ENCODE measurements at regions of chr7 and their contacts with region 1.

Region 1: GRCh38 chr7:100568896-100569844 is 4.5 kb downstream of the SAP25 start:
- DNase-seq: peak; percentile 43 to 70 (median 46)
- H3K4me3 ChIP-seq: peak overlapping the region in 1 of 2 donors; percentile 47
- H3K4me3 Mint-ChIP-seq: peak overlapping the region; percentile 31 to 77 (median 68)
- H3K27ac ChIP-seq: peak overlapping the region; percentile 48
- H3K27ac Mint-ChIP-seq: peak overlapping the region; percentile 32 to 93 (median 83)
- H3K4me1 ChIP-seq: peaks cover 40% of the 10 kb centered on the region
- H3K4me1 Mint-ChIP-seq: peaks cover 14 to 52% (median 27%) of the 10 kb centered on the region in 4 donors
- H3K27me3 ChIP-seq: no peaks in the 10 kb centered on the region
- H3K27me3 Mint-ChIP-seq: no peaks in the 10 kb centered on the region

Region 2: DNA sequence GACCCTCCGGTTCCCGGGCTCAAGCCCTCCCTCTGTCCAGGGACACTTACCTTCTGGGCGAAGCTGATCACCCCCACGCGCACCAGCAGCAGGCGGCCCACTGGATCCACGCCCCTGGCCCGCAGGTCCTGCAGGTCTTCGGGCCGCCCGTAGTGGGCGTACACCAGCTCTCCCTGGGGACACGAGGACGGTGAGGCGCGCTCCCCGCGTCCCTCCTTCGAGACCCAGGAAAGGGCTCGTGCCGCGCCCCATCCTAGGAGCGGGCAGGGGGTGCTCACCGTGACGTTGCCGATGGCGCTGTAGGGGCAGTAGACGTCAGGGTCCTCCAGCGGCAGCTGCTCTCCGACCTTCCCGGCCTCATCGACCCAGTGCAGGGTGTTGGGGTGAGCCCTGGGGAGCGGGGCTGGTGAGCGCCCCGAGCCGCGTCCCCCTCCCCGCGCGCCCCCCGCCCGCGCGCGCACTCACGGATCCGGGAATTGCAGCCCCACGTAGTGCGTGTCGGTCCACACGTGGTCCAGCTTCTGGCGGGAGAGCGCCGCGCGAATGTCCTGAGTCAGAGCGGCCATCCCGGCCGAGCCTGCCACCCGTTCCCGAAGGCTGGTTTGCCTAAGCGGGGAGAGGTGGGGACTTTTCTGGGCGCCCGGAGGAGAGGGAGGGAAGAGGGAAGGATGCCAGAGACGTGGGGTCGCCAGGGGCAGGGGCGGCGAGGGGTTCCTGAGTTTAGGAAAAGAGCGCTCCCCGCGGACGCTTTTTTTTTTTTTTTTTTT is 64.0 kb after region 1 on chr7:
- CTCF ChIA-PET with region 1: interaction called, 4 read pairs
- POLR2A ChIA-PET with region 1: interaction called, 7 read pairs
- intact Hi-C with region 1: loop called (anchors 2 kb)
- DNase-seq: peak; percentile 45 to 66 (median 55)
- H3K4me3 ChIP-seq: peak overlapping the region; percentile 22 to 68
- H3K4me3 Mint-ChIP-seq: peak overlapping the region; percentile 76 to 89 (median 85)
- H3K27ac ChIP-seq: peak overlapping the region; percentile 58
- H3K27ac Mint-ChIP-seq: peak overlapping the region in 6 of 7 donors; percentile 42 to 91 (median 76)
- H3K4me1 ChIP-seq: peaks cover 8% of the 10 kb centered on the region
- H3K4me1 Mint-ChIP-seq: peaks cover 10 to 26% (median 18%) of the 10 kb centered on the region in 4 donors
- H3K27me3 ChIP-seq: no peaks in the 10 kb centered on the region
- H3K27me3 Mint-ChIP-seq: no peaks in the 10 kb centered on the region

Measured in CD4-positive, alpha-beta memory T cell (primary cell).